ENCODE measurements at regions of chr9 and their contacts with region 1.

Region 1: DNA sequence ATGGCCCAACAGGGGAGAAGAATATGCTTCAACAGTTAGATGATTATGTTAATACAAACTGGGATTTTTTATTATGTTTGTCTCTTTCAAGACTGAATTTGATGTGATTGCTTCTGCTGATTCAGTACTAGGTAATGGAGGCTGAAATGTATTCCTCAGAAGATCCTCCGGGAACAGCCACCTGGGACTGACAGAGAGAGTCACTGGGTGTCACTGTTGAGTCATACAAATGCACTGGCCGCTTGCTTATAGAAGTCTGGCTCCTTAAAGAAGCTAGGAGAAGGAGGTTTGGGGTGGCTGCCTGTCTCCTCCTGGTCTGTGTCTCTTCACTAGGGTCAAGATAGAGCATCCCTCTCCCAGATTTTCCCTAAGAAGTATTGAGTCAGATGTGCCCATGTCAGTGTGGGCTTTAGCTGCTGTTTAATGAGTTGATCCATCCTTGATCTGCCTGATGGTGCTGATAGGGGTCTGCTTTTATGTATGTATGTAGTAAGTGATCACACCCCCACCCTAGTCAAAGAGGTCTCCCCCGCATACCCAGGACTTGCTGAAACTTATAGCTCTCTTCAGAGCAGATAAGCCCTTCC is 773.4 kb downstream of the BRINP1 start:
- DNase-seq: no peak
- ATAC-seq: no peak
- H3K4me3 ChIP-seq: no peak overlapping the region
- H3K27ac ChIP-seq: no peak overlapping the region
- H3K4me1 ChIP-seq: no peaks in the 10 kb centered on the region
- H3K27me3 ChIP-seq: no peaks in the 10 kb centered on the region
- CTCF ChIP-seq: no peak
- POLR2A ChIP-seq: no peak

Region 2: GRCh38 chr9:117325831-117326230 is 1270.0 kb before region 1 on chr9:
- in situ Hi-C with region 1: no loop called
- intact Hi-C with region 1: no loop called
- DNase-seq: no peak
- ATAC-seq: no peak
- H3K4me3 ChIP-seq: no peak overlapping the region
- H3K27ac ChIP-seq: no peak overlapping the region
- H3K4me1 ChIP-seq: no peaks in the 10 kb centered on the region
- H3K27me3 ChIP-seq: no peaks in the 10 kb centered on the region
- CTCF ChIP-seq: no peak
- POLR2A ChIP-seq: no peak

Region 3: DNA sequence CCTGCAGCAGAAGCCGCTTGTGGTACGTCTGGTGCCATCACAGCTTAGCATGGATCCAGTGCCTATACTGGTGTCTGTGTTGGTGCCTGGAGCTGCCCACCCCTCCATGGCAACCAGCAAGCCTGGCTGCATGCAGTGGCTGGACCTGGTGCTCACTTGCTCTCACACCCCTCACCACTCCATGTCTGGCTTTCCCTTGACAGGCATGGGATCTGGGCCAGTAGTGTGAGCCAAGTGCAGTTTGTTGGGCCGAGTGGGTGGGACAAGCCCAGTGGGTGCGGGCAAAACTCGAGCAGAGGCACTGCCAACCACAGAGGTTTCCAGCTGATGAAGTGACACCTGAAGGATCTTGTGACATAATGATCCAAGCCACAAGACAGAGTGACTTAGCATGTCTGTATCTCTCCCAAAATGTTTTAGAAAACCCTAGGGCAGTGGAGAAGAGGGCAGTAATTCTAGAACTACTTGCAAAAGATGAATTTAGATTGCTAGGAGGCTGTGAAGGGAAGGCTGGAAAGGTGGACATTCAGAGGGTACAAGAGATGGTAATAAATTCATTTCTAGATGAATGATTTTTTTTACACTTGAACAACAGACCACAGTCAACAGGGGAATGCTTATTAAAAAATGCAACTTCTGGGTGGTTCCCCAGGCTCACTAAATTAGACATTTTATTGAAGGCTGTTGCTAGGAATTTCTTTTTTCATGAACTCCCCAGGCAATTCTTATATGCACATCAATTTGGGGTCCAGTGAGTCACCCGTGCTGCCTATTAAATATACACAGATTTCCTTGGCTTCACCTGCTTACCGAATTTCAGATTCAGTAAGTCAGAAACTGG is 231.3 kb before region 1 on chr9:
- in situ Hi-C with region 1: no loop called
- intact Hi-C with region 1: no loop called
- DNase-seq: no peak
- ATAC-seq: no peak
- H3K4me3 ChIP-seq: no peak overlapping the region
- H3K27ac ChIP-seq: no peak overlapping the region
- H3K4me1 ChIP-seq: no peaks in the 10 kb centered on the region
- H3K27me3 ChIP-seq: no peaks in the 10 kb centered on the region
- CTCF ChIP-seq: no peak
- POLR2A ChIP-seq: no peak

Region 4: GRCh38 chr9:118635416-118635815 is 39.6 kb after region 1 on chr9:
- in situ Hi-C with region 1: no loop called
- intact Hi-C with region 1: no loop called
- DNase-seq: no peak
- ATAC-seq: no peak
- H3K4me3 ChIP-seq: no peak overlapping the region
- H3K27ac ChIP-seq: no peak overlapping the region
- H3K4me1 ChIP-seq: no peaks in the 10 kb centered on the region
- H3K27me3 ChIP-seq: no peaks in the 10 kb centered on the region
- CTCF ChIP-seq: no peak
- POLR2A ChIP-seq: no peak

Region 5: GRCh38 chr9:118693645-118694044 is 97.8 kb after region 1 on chr9:
- in situ Hi-C with region 1: loop called in 1 of 4 experiments (anchors 25 kb)
- intact Hi-C with region 1: no loop called
- DNase-seq: no peak
- ATAC-seq: no peak
- H3K4me3 ChIP-seq: no peak overlapping the region
- H3K27ac ChIP-seq: no peak overlapping the region
- H3K4me1 ChIP-seq: no peaks in the 10 kb centered on the region
- H3K27me3 ChIP-seq: no peaks in the 10 kb centered on the region
- CTCF ChIP-seq: no peak
- POLR2A ChIP-seq: no peak